Activated CD4-positive, alpha-beta T cell treated with anti-CD3 and anti-CD28 coated beads, Interleukin-2, amount 10 ng/mL, durations not matched to agents 7 days and 5 days (primary cell): ENCODE measurements at regions of chr17 and their contacts with region 1.

Region 1: GRCh38 chr17:50094753-50095619 is at the start of gene PDK2:
- DNase-seq: peak; percentile 97
- H3K4me3 Mint-ChIP-seq: peak within 1 kb of the TSS; percentile 96
- H3K27ac Mint-ChIP-seq: peak within 1 kb of the TSS; percentile 93
- H3K4me1 Mint-ChIP-seq: peaks cover 27% of the 10 kb centered on the region
- H3K27me3 Mint-ChIP-seq: peaks cover 5% of the 10 kb centered on the region
- total RNA-seq, gene PDK2: 29.4 to 31.3 TPM

Region 2: GRCh38 chr17:50055426-50056230 is 39.4 kb before region 1 on chr17 and contains the start of gene ITGA3:
- CTCF ChIA-PET with region 1: interaction called, 10 read pairs
- POLR2A ChIA-PET with region 1: no interaction called
- DNase-seq: peak; percentile 62
- H3K4me3 Mint-ChIP-seq: peak within 1 kb of the TSS; percentile 84
- H3K27ac Mint-ChIP-seq: peak within 1 kb of the TSS; percentile 71
- H3K4me1 Mint-ChIP-seq: peaks cover 41% of the 10 kb centered on the region
- H3K27me3 Mint-ChIP-seq: peaks cover 11% of the 10 kb centered on the region
- total RNA-seq, gene ITGA3: 5.8 to 7.9 TPM

Region 3: DNA sequence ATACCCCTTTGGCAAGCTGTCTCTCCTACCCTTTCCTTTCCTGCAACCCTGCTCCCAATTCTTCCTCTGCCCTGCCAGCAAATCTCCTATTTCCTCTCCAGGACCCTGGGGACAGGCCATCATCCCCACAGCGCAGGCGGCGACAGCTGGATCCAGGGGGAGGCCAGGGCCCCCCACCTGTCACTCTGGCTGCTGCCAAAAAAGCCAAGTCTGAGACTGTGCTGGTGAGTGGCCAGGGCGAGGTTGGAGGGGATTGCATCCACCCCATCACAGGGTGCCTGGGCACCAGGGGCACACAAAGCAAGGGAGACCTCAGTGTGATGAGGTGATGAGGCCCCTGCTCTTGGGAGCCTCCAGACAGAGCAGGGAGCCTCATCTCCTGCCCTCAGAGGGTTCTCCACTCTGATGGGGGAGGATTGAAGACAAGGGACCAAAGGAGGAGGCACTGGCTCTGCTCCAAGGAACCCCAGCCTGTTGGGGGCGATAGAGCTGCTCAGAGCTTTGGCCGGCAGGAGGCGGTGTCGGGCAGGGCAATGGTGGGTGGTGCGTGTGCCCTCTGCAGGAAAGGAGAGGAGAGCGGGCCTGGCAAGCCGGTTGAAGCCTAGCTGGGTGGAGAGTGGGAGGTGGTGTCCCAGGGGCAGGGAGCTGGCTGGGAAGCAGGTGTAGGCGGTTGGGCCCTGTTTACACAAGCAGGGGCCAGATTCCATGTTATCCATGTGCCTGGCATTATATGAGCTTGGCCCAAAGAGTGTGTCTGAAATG is 15.5 kb before region 1 on chr17:
- CTCF ChIA-PET with region 1: interaction called, 29 read pairs
- POLR2A ChIA-PET with region 1: no interaction called
- DNase-seq: no peak
- H3K4me3 Mint-ChIP-seq: no peak overlapping the region
- H3K27ac Mint-ChIP-seq: no peak overlapping the region
- H3K4me1 Mint-ChIP-seq: no peaks in the 10 kb centered on the region
- H3K27me3 Mint-ChIP-seq: no peaks in the 10 kb centered on the region

Region 4: DNA sequence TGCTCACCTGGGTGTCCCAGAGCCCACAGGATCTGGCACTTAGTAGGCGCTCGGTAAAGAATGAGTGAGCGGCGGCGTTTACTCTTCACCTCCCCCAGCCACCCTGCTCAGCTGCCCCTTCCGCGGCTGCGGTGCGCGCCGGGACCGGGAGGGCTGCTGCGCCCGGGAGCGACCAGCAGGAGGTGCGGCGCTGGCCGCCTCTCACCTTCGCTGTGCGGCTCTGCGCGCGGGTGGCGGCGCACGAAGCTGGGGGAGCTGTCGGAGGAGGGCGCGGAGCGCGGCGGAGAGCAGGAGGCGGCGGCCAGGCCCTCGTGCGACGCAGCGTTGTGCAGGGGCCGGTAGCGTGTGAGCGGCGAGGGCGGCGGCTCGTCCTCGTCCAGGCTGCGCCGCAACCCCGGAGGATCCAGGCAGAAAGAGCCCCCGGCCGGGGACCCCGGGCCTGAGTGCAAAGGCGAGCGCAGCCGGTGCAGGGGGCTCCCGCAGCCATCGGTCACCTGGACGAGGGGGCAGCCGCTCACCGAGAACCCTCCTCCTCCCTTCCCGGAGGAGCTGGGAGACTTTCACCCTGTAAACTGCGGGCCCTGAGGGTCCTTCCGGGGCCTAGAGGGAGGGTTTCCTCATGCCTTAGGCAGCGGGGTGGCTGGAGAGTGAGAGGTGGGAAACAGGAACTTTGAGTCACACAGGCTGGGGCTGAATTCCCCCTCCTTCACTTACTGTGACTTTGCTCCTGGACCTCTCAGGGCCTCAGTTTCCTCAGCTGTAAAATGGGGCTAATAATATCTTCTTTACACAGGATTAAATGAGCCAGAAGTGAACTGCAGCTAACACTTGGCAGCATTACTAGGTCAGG is 22.4 kb after region 1 on chr17:
- CTCF ChIA-PET with region 1: interaction called, 10 read pairs
- POLR2A ChIA-PET with region 1: no interaction called
- DNase-seq: peak; percentile 60
- H3K4me3 Mint-ChIP-seq: no peak overlapping the region
- H3K27ac Mint-ChIP-seq: no peak overlapping the region
- H3K4me1 Mint-ChIP-seq: peaks cover 7% of the 10 kb centered on the region
- H3K27me3 Mint-ChIP-seq: peaks cover 56% of the 10 kb centered on the region

Region 5: GRCh38 chr17:50169121-50169764 is 74.3 kb after region 1 on chr17:
- CTCF ChIA-PET with region 1: interaction called, 15 read pairs
- POLR2A ChIA-PET with region 1: no interaction called
- DNase-seq: peak; percentile 59
- H3K4me3 Mint-ChIP-seq: no peak overlapping the region
- H3K27ac Mint-ChIP-seq: peak overlapping the region; percentile 27
- H3K4me1 Mint-ChIP-seq: peaks cover 17% of the 10 kb centered on the region
- H3K27me3 Mint-ChIP-seq: no peaks in the 10 kb centered on the region